Heart left ventricle (tissue), 16 donors: ENCODE measurements at regions of chr9 and their contacts with region 1.

Region 1: GRCh38 chr9:81427870-81428269 is 261.5 kb downstream of the TLE1 start:
- DNase-seq: no peak
- ATAC-seq: no peak
- H3K4me3 ChIP-seq: no peak overlapping the region
- H3K27ac ChIP-seq: no peak overlapping the region
- H3K4me1 ChIP-seq: peaks cover 0 to 12% (median 1%) of the 10 kb centered on the region in 12 donors
- H3K27me3 ChIP-seq: no peaks in the 10 kb centered on the region
- CTCF ChIP-seq: no peak
- POLR2A ChIP-seq: no peak

Region 2: DNA sequence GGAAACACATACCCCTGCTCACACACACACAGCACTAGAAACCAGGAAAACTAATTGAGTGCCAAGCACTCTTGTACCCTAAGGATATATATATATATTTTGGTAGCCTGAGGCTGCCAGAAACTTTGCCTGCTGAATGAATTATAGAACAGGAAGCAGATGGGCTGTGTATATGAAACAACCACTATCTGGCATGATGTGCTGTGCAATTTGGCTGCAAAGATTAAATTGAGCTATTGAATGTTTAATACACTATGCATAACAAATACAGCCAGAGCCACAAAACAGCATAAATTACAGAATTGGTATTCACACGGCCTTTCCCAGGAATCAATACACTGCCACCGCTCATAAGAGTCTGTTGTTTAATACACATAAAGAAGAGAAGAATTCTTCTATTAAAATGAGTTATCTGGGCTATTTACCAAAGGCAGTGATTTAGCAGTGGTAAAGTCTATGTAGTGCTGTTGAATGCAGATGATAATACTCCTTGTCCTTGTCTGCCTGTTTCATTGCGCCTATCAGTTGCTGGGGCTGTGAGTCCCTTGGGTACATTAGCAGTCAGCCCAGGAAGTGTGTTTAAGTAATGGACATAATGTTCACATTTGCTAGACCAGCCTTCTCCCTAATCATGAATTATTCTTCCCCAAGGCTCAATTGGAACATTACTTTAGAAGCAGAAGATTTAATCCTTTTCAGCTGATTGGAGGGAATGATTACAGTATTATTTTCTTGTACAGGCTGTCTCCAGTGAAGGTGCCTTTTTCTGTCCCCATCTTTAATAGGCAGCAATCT is 32.8 kb before region 1 on chr9:
- intact Hi-C with region 1: loop called in 1 of 10 experiments (anchors 5 kb)
- DNase-seq: no peak
- ATAC-seq: peak; percentile 29 to 68 (median 42)
- H3K4me3 ChIP-seq: no peak overlapping the region
- H3K27ac ChIP-seq: peak overlapping the region in 7 of 12 donors; percentile 13 to 77 (median 20)
- H3K4me1 ChIP-seq: peaks cover 0 to 28% (median 3%) of the 10 kb centered on the region in 12 donors
- H3K27me3 ChIP-seq: no peaks in the 10 kb centered on the region
- CTCF ChIP-seq: no peak
- POLR2A ChIP-seq: no peak

Region 3: DNA sequence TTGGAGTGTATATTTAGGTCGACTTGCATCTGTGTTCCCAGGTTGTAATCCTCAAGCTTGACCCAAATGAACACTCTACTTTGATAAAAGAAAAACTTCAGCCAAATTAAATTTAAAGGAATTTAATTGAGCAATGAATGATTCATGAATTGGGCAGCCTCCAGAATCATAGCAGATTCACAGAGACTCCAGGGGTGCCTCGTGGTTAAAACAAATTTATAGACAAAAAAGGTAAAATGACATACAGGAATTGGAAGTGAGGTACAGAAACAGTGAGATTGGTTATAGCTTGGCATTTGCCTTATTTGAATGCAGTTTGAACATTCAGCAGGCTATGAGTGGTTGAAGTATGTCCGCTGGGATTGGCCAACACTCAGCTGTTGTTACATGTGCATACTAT is 478.8 kb after region 1 on chr9:
- intact Hi-C with region 1: no loop called
- DNase-seq: no peak
- ATAC-seq: no peak
- H3K4me3 ChIP-seq: no peak overlapping the region
- H3K27ac ChIP-seq: no peak overlapping the region
- H3K4me1 ChIP-seq: peaks cover 0 to 3% (median 0%) of the 10 kb centered on the region in 12 donors
- H3K27me3 ChIP-seq: peaks cover 0 to 4% (median 0%) of the 10 kb centered on the region in 9 donors
- CTCF ChIP-seq: no peak
- POLR2A ChIP-seq: no peak

Region 4: DNA sequence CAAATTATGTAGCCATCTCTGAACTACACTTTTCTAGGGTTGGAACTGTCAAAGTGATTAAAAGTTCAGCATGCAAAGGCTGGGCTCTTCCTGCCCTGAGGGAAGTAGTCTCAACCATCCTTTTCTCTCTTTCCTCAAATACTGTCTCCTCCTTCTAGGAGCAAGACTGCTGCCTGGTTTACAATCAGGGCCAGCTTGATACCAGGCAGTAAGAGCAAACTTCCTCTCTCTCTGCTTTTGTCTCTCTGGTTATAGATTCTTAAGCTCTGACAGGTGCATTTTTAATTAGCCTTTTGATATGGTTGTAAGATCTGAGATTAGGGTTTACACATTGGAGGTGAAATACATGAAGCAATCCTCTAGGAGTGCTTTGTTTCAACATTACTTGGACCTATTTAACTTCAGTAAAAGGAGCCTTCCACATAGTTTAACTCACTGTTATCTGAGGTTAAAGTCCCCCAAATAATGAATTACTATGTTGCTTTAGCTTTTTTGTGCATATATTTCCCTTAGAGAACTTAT is 996.8 kb after region 1 on chr9:
- intact Hi-C with region 1: no loop called
- DNase-seq: no peak
- ATAC-seq: no peak
- H3K4me3 ChIP-seq: no peak overlapping the region
- H3K27ac ChIP-seq: no peak overlapping the region
- H3K4me1 ChIP-seq: peaks cover 0 to 8% (median 0%) of the 10 kb centered on the region in 12 donors
- H3K27me3 ChIP-seq: no peaks in the 10 kb centered on the region
- CTCF ChIP-seq: no peak
- POLR2A ChIP-seq: no peak